WTC11 (cell line): ENCODE measurements at regions of chr13 and their contacts with region 1.

Region 1: GRCh38 chr13:53151336-53152056 is 122.9 kb downstream of the OLFM4 start:
- DNase-seq: peak; percentile 71
- ATAC-seq: peak; percentile 99
- H3K4me3 Mint-ChIP-seq: no peak overlapping the region
- H3K27ac Mint-ChIP-seq: no peak overlapping the region
- H3K4me1 Mint-ChIP-seq: no peaks in the 10 kb centered on the region; the same call in 1 of the 2 replicates
- H3K27me3 Mint-ChIP-seq: no peaks in the 10 kb centered on the region
- CTCF ChIP-seq: peak; percentile 86

Region 2: DNA sequence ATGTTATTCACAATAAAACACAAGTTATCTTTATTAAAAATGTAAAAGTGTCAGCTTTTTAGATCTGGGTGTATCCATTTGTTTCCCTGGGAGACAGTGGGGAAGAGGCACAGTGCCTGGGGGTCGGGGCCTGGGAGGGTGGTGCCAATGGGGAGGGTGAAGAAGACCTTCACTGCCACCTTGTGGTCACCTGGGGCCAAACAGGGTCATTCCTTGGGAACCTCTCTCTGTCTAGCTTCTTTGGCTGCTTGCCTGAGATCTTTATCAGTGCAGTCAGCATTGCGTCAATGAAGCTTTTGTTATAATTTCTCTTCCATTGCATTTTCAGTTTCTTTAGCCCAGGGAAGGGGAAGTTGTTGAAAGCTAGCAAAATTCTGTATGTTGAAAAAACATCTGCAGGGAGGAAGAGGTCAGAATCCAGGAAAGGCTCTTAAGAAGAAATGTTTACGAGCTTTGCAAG is 342.2 kb before region 1 on chr13:
- CTCF ChIA-PET with region 1: interaction called, 14 read pairs
- POLR2A ChIA-PET with region 1: no interaction called
- DNase-seq: peak; percentile 83
- ATAC-seq: peak; percentile 96
- H3K4me3 Mint-ChIP-seq: no peak overlapping the region
- H3K27ac Mint-ChIP-seq: no peak overlapping the region
- H3K4me1 Mint-ChIP-seq: peaks cover 16% of the 10 kb centered on the region
- H3K27me3 Mint-ChIP-seq: no peaks in the 10 kb centered on the region
- CTCF ChIP-seq: peak; percentile 80

Region 3: DNA sequence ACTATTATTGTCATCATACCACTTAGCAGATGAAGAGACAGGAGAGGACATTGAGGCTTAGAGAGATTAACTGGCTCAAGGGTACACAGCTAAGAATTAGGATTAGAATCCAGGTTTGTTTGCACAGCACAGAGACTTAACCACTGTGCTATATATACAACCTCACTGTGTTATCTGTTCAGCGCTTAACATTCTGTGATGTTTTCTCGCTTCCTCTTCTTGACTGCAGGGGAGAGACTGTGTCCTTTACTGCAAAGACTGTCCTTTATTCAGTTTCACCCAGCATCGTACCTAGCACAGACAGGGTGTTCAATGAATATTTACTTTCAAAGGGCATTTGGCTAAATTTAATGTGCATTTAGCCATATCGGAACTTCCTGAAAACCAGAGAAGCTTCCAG is 248.2 kb before region 1 on chr13:
- CTCF ChIA-PET with region 1: interaction called, 14 read pairs
- POLR2A ChIA-PET with region 1: no interaction called
- DNase-seq: no peak
- ATAC-seq: no peak
- H3K4me3 Mint-ChIP-seq: no peak overlapping the region
- H3K27ac Mint-ChIP-seq: no peak overlapping the region
- H3K4me1 Mint-ChIP-seq: peaks cover 86% of the 10 kb centered on the region
- H3K27me3 Mint-ChIP-seq: peaks cover 37% of the 10 kb centered on the region
- CTCF ChIP-seq: no peak

Region 4: GRCh38 chr13:53004573-53004972 is 146.9 kb before region 1 on chr13:
- CTCF ChIA-PET with region 1: interaction called, 12 read pairs
- POLR2A ChIA-PET with region 1: no interaction called
- DNase-seq: no peak
- ATAC-seq: 0 out of 2 replicates have a peak, but pooled peaks have one; percentile 39
- H3K4me3 Mint-ChIP-seq: no peak overlapping the region
- H3K27ac Mint-ChIP-seq: no peak overlapping the region
- H3K4me1 Mint-ChIP-seq: peaks cover 4% of the 10 kb centered on the region; the same call in 1 of the 2 replicates
- H3K27me3 Mint-ChIP-seq: 0 out of 2 replicates have a peak, but pooled peaks cover under 1% of the 10 kb centered on the region
- CTCF ChIP-seq: no peak

Region 5: GRCh38 chr13:53075356-53076041 is 76.0 kb before region 1 on chr13:
- CTCF ChIA-PET with region 1: interaction called, 11 read pairs
- POLR2A ChIA-PET with region 1: no interaction called
- DNase-seq: no peak
- ATAC-seq: peak; percentile 62
- H3K4me3 Mint-ChIP-seq: no peak overlapping the region
- H3K27ac Mint-ChIP-seq: no peak overlapping the region
- H3K4me1 Mint-ChIP-seq: peaks cover 8% of the 10 kb centered on the region
- H3K27me3 Mint-ChIP-seq: peaks cover 4% of the 10 kb centered on the region; the same call in 1 of the 2 replicates
- CTCF ChIP-seq: no peak

Region 6: DNA sequence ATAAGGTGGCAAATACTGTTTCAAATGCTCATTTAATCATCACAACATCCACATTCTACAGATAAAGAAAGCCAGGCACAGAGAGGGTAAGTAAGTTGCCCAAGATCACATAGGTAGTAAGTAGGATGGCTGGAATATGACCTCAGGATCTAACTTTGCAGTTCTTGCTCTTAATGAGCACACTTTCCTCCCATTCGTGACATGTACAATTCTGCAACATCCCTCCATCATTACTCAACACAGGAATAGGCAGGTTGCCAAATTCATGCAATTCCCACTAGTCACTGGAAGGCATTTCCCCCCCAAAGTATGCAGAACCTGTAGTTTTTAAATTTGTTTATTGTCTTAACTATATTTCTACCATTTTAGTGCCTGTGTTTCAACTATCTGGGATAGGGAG is 13.7 kb before region 1 on chr13:
- CTCF ChIA-PET with region 1: interaction called, 25 read pairs
- POLR2A ChIA-PET with region 1: no interaction called
- DNase-seq: no peak
- ATAC-seq: no peak
- H3K4me3 Mint-ChIP-seq: no peak overlapping the region
- H3K27ac Mint-ChIP-seq: no peak overlapping the region
- H3K4me1 Mint-ChIP-seq: peaks cover 6% of the 10 kb centered on the region
- H3K27me3 Mint-ChIP-seq: no peaks in the 10 kb centered on the region
- CTCF ChIP-seq: no peak

Region 7: GRCh38 chr13:53191091-53191490 is 39.6 kb after region 1 on chr13:
- CTCF ChIA-PET with region 1: interaction called, 10 read pairs
- POLR2A ChIA-PET with region 1: no interaction called
- DNase-seq: no peak
- ATAC-seq: peak; percentile 73
- H3K4me3 Mint-ChIP-seq: no peak overlapping the region
- H3K27ac Mint-ChIP-seq: no peak overlapping the region
- H3K4me1 Mint-ChIP-seq: peaks cover 8% of the 10 kb centered on the region
- H3K27me3 Mint-ChIP-seq: no peaks in the 10 kb centered on the region; the same call in none of the 2 replicates
- CTCF ChIP-seq: no peak

Region 8: GRCh38 chr13:53490752-53491151 is 339.3 kb after region 1 on chr13:
- CTCF ChIA-PET with region 1: no interaction called
- POLR2A ChIA-PET with region 1: no interaction called
- DNase-seq: no peak
- ATAC-seq: no peak
- H3K4me3 Mint-ChIP-seq: no peak overlapping the region
- H3K27ac Mint-ChIP-seq: no peak overlapping the region
- H3K4me1 Mint-ChIP-seq: no peaks in the 10 kb centered on the region
- H3K27me3 Mint-ChIP-seq: no peaks in the 10 kb centered on the region; the same call in 1 of the 2 replicates
- CTCF ChIP-seq: no peak